Naive thymus-derived CD4-positive, alpha-beta T cell (primary cell): ENCODE measurements at regions of chr3 and their contacts with region 1.

Region 1: GRCh38 chr3:49339945-49340800 is at the start of gene USP4:
- DNase-seq: peak; percentile 78 to 93 (median 91)
- ATAC-seq: peak; percentile 91
- H3K4me3 ChIP-seq: peak within 1 kb of the TSS; percentile 89
- H3K4me3 Mint-ChIP-seq: peak within 1 kb of the TSS; percentile 81 to 96 (median 86)
- H3K27ac ChIP-seq: peak within 1 kb of the TSS; percentile 95
- H3K27ac Mint-ChIP-seq: peak within 1 kb of the TSS; percentile 95 to 99 (median 98)
- H3K4me1 ChIP-seq: peaks cover 23 to 30% of the 10 kb centered on the region in 2 donors
- H3K4me1 Mint-ChIP-seq: peaks cover 32 to 61% (median 47%) of the 10 kb centered on the region in 7 donors
- H3K27me3 ChIP-seq: no peaks in the 10 kb centered on the region
- H3K27me3 Mint-ChIP-seq: no peaks in the 10 kb centered on the region
- total RNA-seq, gene USP4: 98.3 to 135 (median 109) TPM

Region 2: GRCh38 chr3:48989796-48990635 is 350.2 kb before region 1 on chr3 and contains the start of gene P4HTM:
- CTCF ChIA-PET with region 1: interaction called, 3 read pairs
- POLR2A ChIA-PET with region 1: interaction called, 3 read pairs
- intact Hi-C with region 1: loop called in 1 of 2 experiments (anchors 5 kb)
- DNase-seq: peak; percentile 36 to 83 (median 55)
- ATAC-seq: peak; percentile 68
- H3K4me3 ChIP-seq: peak within 1 kb of the TSS; percentile 96
- H3K4me3 Mint-ChIP-seq: peak within 1 kb of the TSS; percentile 89 to 97 (median 93)
- H3K27ac ChIP-seq: peak within 1 kb of the TSS; percentile 82
- H3K27ac Mint-ChIP-seq: peak within 1 kb of the TSS; percentile 87 to 95 (median 90)
- H3K4me1 ChIP-seq: peaks cover 24% of the 10 kb centered on the region in 2 donors
- H3K4me1 Mint-ChIP-seq: peaks cover 27 to 56% (median 42%) of the 10 kb centered on the region in 7 donors
- H3K27me3 ChIP-seq: no peaks in the 10 kb centered on the region
- H3K27me3 Mint-ChIP-seq: no peaks in the 10 kb centered on the region
- total RNA-seq, gene P4HTM: 37.9 to 74.7 (median 53.1) TPM

Region 3: GRCh38 chr3:49035281-49035680 is 304.9 kb before region 1 on chr3:
- CTCF ChIA-PET with region 1: no interaction called
- POLR2A ChIA-PET with region 1: no interaction called
- intact Hi-C with region 1: no loop called
- DNase-seq: no peak
- ATAC-seq: peak; percentile 34
- H3K4me3 ChIP-seq: no peak overlapping the region
- H3K4me3 Mint-ChIP-seq: no peak overlapping the region
- H3K27ac ChIP-seq: no peak overlapping the region
- H3K27ac Mint-ChIP-seq: peak overlapping the region in 1 of 9 donors; percentile 38
- H3K4me1 ChIP-seq: no peaks in the 10 kb centered on the region
- H3K4me1 Mint-ChIP-seq: peaks cover 0 to 8% (median 3%) of the 10 kb centered on the region in 7 donors
- H3K27me3 ChIP-seq: no peaks in the 10 kb centered on the region
- H3K27me3 Mint-ChIP-seq: no peaks in the 10 kb centered on the region

Region 4: DNA sequence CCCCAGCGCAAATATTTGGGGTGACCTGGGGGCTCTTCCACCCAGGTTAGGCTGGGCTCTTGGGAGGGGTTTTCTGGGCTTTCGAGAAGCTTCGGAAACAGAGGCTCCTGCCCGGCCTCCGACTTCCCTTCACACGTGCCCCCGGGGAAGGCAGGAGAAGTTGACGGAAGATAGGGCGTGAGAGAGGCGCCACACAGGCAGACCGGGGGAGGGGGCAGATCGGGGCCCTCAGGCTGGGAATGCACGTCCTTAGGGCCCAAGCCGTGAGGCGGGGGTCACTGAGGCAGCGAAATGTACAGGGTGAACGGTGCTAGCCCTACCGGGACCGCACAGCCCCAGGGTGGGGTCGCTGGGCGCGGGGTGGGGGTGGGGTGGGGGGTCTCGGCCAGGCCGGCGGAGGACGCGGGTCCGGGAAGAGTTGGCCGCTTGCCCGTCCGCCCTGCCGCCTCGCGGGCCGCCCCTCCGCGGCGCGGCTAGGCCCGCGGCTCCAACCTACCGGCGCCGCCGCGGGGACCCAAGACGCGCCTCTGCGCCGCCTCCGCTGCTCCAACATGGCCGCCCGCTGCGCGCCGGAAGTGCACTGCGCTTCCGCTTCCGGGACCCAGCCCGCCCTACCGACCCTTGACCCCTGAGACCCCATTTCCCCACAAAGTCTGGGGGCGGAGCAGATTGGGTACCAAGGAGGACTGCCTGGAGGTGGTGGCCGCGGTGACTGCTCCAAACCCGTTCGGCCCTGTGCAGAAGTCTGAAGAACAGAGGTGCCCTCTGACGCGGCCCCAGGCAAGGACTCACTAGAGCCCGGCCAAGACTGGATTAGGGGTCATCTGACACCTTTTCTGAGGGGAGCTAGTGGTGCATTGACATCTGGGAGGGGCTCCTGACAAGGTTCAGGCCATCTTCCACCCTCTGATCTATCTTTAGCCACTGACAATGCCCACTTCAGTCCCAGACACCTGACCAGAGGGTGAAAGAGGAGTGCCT is 174.1 kb before region 1 on chr3 and contains the start of gene CCDC71:
- CTCF ChIA-PET with region 1: interaction called, 3 read pairs
- POLR2A ChIA-PET with region 1: interaction called, 6 read pairs
- intact Hi-C with region 1: loop called (anchors 1 to 2 kb)
- DNase-seq: peak; percentile 63 to 82 (median 72)
- ATAC-seq: peak; percentile 85
- H3K4me3 ChIP-seq: peak within 1 kb of the TSS; percentile 58
- H3K4me3 Mint-ChIP-seq: peak within 1 kb of the TSS; percentile 89 to 96 (median 92)
- H3K27ac ChIP-seq: peak within 1 kb of the TSS; percentile 79
- H3K27ac Mint-ChIP-seq: peak within 1 kb of the TSS; percentile 87 to 96 (median 93)
- H3K4me1 ChIP-seq: peaks cover 16 to 29% of the 10 kb centered on the region in 2 donors
- H3K4me1 Mint-ChIP-seq: peaks cover 16 to 51% (median 42%) of the 10 kb centered on the region in 7 donors
- H3K27me3 ChIP-seq: no peaks in the 10 kb centered on the region
- H3K27me3 Mint-ChIP-seq: no peaks in the 10 kb centered on the region
- total RNA-seq, gene CCDC71: 16.5 to 39.5 (median 26.3) TPM

Region 5: DNA sequence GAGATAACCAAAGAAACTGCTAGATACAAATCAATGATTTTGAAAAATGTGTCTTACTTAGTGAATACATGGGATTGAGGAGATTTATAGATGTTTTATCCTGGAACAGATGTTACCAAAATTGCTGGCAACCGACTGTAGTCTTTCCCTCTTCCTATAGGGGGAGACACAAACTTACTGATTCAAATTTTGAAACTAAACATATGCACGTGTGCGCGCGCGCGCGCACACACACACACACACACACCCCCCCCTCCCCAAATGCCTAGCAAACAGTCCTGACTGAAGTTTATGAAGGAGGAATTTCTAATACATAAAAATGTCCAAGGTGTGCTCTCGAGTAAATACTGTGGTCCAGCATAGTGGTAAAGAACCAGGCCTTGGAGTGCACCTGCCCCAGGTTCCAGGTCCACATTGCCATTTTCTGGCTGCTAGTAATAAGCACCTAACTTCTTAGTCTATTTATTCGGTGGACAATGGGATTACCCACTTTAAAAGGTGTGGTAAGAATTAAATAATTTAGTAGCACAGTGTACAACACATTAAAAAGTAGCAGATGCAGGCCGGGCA is 44.6 kb before region 1 on chr3:
- CTCF ChIA-PET with region 1: interaction called, 3 read pairs
- POLR2A ChIA-PET with region 1: interaction called, 4 read pairs
- intact Hi-C with region 1: loop called in 1 of 2 experiments (anchors 1 kb)
- DNase-seq: peak in 7 of 9 donors; percentile 32 to 53 (median 48)
- ATAC-seq: peak; percentile 80
- H3K4me3 ChIP-seq: no peak overlapping the region
- H3K4me3 Mint-ChIP-seq: peak overlapping the region in 1 of 10 donors; percentile 19
- H3K27ac ChIP-seq: no peak overlapping the region
- H3K27ac Mint-ChIP-seq: peak overlapping the region; percentile 16 to 84 (median 42)
- H3K4me1 ChIP-seq: no peaks in the 10 kb centered on the region
- H3K4me1 Mint-ChIP-seq: peaks cover 0 to 7% (median 3%) of the 10 kb centered on the region in 7 donors
- H3K27me3 ChIP-seq: no peaks in the 10 kb centered on the region
- H3K27me3 Mint-ChIP-seq: no peaks in the 10 kb centered on the region

Region 6: GRCh38 chr3:49406571-49407566 is 66.7 kb after region 1 on chr3:
- CTCF ChIA-PET with region 1: interaction called, 11 read pairs
- POLR2A ChIA-PET with region 1: interaction called, 71 read pairs
- intact Hi-C with region 1: loop called (anchors 1 kb)
- DNase-seq: no peak
- ATAC-seq: no peak
- H3K4me3 ChIP-seq: no peak overlapping the region
- H3K4me3 Mint-ChIP-seq: peak overlapping the region in 9 of 10 donors; percentile 15 to 70 (median 59)
- H3K27ac ChIP-seq: peak overlapping the region; percentile 32
- H3K27ac Mint-ChIP-seq: peak overlapping the region in 8 of 9 donors; percentile 5 to 93 (median 84)
- H3K4me1 ChIP-seq: peaks cover 38 to 46% of the 10 kb centered on the region in 2 donors
- H3K4me1 Mint-ChIP-seq: peaks cover 39 to 70% (median 55%) of the 10 kb centered on the region in 7 donors
- H3K27me3 ChIP-seq: no peaks in the 10 kb centered on the region
- H3K27me3 Mint-ChIP-seq: no peaks in the 10 kb centered on the region

Region 7: DNA sequence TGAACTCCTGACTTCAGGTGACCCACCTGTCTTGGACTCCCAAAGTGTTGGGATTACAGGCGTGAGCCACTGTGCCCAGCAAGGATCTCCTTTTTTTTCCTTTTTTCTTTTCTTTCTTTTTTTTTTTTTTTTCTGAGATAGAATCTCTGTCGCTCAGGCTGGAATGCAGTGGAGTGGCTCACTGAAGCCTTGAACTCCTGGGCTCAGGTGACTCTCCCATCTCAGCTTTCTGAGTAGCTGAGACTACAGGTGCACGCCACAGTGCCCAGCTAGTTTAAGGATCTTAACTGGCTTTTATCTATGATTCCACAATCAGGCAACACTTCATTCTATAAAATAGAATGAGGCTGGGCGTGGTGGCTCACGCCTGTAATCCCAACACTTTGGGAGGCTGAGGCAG is 105.2 kb after region 1 on chr3:
- CTCF ChIA-PET with region 1: interaction called, 45 read pairs
- POLR2A ChIA-PET with region 1: interaction called, 24 read pairs
- intact Hi-C with region 1: loop called (anchors 1 kb)
- DNase-seq: no peak
- ATAC-seq: no peak
- H3K4me3 ChIP-seq: no peak overlapping the region
- H3K4me3 Mint-ChIP-seq: no peak overlapping the region
- H3K27ac ChIP-seq: no peak overlapping the region
- H3K27ac Mint-ChIP-seq: peak overlapping the region in 3 of 9 donors; percentile 45 to 92 (median 60)
- H3K4me1 ChIP-seq: peaks cover 10 to 15% of the 10 kb centered on the region in 2 donors
- H3K4me1 Mint-ChIP-seq: peaks cover 5 to 25% (median 18%) of the 10 kb centered on the region in 7 donors
- H3K27me3 ChIP-seq: no peaks in the 10 kb centered on the region
- H3K27me3 Mint-ChIP-seq: no peaks in the 10 kb centered on the region

Region 8: DNA sequence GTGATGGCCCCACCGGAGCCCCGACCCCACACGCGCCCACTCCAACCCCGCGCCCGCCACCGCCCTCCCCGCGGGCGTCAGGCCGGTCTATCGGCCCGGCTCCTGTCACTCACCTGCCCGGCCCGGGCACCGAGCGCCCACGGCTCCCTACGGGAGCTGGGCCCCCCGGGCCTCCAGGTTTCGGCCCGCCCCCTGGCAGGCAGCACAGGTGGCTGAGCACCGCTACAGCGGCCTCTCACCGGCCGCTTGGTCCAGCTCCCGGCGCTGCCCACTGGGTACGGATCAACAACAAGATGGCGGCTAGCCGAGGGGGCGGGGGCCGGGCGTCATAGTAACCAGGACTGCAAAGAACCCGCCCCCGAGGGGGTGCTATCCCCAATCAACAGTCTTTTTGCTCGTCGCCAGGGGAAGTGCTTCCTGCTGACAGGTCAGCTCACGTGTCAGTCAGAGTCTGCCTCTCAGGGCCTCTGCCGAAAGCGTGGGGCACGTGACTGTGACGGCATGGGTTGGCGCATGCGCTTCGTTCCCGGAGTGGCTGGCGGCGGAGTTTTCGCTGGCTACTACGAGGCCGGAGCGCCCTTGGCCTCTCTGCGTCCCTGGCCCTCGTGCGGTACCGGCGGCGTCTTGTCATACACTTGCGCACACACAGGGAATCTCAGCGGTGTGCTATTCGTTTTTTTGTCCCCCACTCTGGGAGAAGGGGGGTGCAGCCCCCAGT is 446.2 kb after region 1 on chr3 and contains the start of gene IP6K1:
- CTCF ChIA-PET with region 1: no interaction called
- POLR2A ChIA-PET with region 1: no interaction called
- intact Hi-C with region 1: loop called in 1 of 2 experiments (anchors 5 kb)
- DNase-seq: peak; percentile 90 to 100 (median 99)
- ATAC-seq: peak; percentile 99
- H3K4me3 ChIP-seq: peak within 1 kb of the TSS; percentile 80
- H3K4me3 Mint-ChIP-seq: peak within 1 kb of the TSS; percentile 91 to 99 (median 94)
- H3K27ac ChIP-seq: peak within 1 kb of the TSS; percentile 95
- H3K27ac Mint-ChIP-seq: peak within 1 kb of the TSS; percentile 96 to 100 (median 99)
- H3K4me1 ChIP-seq: peaks cover 9 to 12% of the 10 kb centered on the region in 2 donors
- H3K4me1 Mint-ChIP-seq: peaks cover 15 to 50% (median 32%) of the 10 kb centered on the region in 7 donors
- H3K27me3 ChIP-seq: no peaks in the 10 kb centered on the region
- H3K27me3 Mint-ChIP-seq: peaks cover 0 to 6% (median 0%) of the 10 kb centered on the region in 5 donors
- total RNA-seq, gene IP6K1: 41.8 to 57.0 (median 47.3) TPM